ENCODE measurements at regions of chr9 and their contacts with region 1.

Region 1: GRCh38 chr9:35553670-35554543 is 51.2 kb upstream of the TESK1 start:
- H3K4me3 ChIP-seq: no peak overlapping the region
- H3K27ac ChIP-seq: no peak overlapping the region
- H3K4me1 ChIP-seq: 0 out of 2 replicates have a peak, but pooled peaks cover 3% of the 10 kb centered on the region
- CTCF ChIP-seq: peak; percentile 67

Region 2: DNA sequence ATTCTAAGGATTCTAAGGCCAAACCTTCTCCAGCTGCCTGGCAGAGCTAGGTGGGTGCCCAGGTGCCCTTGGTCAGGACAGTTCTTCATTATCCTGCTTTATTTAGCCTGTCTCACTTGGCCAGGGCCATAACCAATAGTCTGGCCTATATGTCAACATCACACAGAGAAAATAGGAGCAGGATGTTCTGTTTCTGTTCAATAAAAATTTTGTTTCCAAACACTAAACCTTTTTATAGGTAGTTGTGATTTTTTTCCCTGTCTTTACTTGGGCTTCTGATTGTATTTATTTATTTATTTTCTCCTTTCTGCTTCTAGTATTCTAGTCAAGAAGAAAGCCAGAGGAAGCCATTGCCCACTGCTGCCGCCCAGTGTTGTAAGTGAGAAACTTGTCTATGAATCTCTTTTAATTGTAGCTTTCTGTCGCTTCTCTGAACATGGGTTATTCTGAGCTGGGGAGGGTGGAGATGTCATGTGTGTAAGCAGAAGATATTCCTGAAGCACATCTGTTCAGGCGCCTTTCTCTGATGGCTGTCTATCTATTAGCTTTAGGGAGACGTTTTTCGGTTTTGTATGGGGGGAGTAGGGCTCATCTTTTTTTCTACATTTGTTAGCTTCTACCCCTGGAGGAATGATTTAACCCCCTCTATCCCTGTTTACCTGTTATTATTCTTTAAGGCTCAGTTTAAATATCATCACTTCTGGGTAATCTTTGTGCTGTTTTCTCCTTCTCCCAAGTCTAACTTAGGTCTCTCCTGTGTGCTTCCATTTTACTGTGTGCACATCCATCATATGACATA is 295.0 kb before region 1 on chr9:
- CTCF ChIA-PET with region 1: interaction called, 10 read pairs
- POLR2A ChIA-PET with region 1: no interaction called
- H3K4me3 ChIP-seq: no peak overlapping the region
- H3K27ac ChIP-seq: no peak overlapping the region
- H3K4me1 ChIP-seq: no peaks in the 10 kb centered on the region
- CTCF ChIP-seq: 0 out of 2 replicates have a peak, but pooled peaks have one; percentile 25

Region 3: GRCh38 chr9:35489313-35490154 is 64.4 kb before region 1 on chr9 and contains the start of gene RUSC2:
- CTCF ChIA-PET with region 1: interaction called, 65 read pairs
- POLR2A ChIA-PET with region 1: interaction called, 6 read pairs
- H3K4me3 ChIP-seq: peak within 1 kb of the TSS; percentile 61
- H3K27ac ChIP-seq: peak within 1 kb of the TSS; percentile 58
- H3K4me1 ChIP-seq: peaks cover 3% of the 10 kb centered on the region; the same call in 1 of the 2 replicates
- CTCF ChIP-seq: peak; percentile 47

Region 4: DNA sequence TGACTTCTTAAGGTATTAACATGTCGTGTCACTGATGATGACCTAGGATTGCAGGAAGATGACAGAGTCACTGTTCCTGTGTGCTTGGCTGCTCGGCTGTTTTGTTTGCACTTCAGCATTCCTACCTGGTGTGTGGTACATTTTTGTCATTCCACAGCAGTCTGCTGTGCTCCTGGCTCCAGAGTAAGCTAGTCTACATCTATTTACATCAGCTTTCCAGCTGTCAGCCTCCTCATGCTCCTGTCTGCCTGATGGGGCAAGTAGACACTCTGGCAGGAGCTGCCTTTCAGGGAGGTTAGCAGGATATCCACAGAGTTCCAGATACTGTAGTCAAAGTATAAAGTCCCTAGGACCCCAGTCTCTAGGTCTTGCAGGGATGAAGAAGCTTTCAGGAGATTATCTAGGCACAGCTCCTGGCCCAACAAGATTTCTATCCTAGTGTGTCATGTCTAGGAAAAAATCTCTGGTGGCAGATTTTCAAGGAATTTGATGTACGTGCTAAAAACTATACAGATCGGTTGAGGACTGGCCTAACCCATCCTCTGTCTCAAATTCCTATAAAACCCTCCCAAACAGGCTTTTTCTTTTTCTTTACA is 35.6 kb before region 1 on chr9:
- CTCF ChIA-PET with region 1: interaction called, 89 read pairs
- POLR2A ChIA-PET with region 1: interaction called, 8 read pairs
- H3K4me3 ChIP-seq: no peak overlapping the region
- H3K27ac ChIP-seq: no peak overlapping the region
- H3K4me1 ChIP-seq: 0 out of 2 replicates have a peak, but pooled peaks cover 2% of the 10 kb centered on the region
- CTCF ChIP-seq: no peak

Region 5: GRCh38 chr9:35538361-35539234 is 15.3 kb before region 1 on chr9:
- CTCF ChIA-PET with region 1: interaction called, 34 read pairs
- POLR2A ChIA-PET with region 1: no interaction called
- H3K4me3 ChIP-seq: no peak overlapping the region
- H3K27ac ChIP-seq: no peak overlapping the region
- H3K4me1 ChIP-seq: no peaks in the 10 kb centered on the region
- CTCF ChIP-seq: no peak

Region 6: GRCh38 chr9:35603987-35604577 is 50.2 kb after region 1 on chr9:
- CTCF ChIA-PET with region 1: interaction called, 10 read pairs
- POLR2A ChIA-PET with region 1: interaction called, 4 read pairs
- H3K4me3 ChIP-seq: peak overlapping the region; percentile 54
- H3K27ac ChIP-seq: peak overlapping the region; percentile 43
- H3K4me1 ChIP-seq: no peaks in the 10 kb centered on the region
- CTCF ChIP-seq: peak; percentile 96